WTC11 (cell line): ENCODE measurements at regions of chrX and their contacts with region 1.

Region 1: DNA sequence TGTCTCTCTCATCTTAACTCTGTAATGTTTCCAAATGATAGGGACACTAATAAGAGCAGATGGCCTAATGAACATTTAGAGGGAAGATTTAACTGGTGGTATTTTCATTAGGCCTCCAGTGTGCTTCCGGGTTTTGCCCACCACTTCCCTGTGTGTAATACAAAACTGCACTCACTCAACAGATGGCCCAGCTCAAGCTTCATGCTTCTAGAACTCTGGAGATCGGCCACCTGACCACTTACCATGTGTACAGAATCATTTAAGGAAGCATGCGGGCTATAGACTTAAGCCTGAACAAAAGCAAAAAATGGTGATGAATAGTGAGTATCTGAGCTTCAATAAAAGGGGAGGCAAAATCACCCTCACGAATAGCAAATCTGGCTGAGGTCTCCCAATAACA is 89.3 kb downstream of the SH2D1A start:
- DNase-seq: no peak
- ATAC-seq: no peak
- H3K4me3 Mint-ChIP-seq: no peak overlapping the region
- H3K27ac Mint-ChIP-seq: no peak overlapping the region
- H3K4me1 Mint-ChIP-seq: 0 out of 2 replicates have a peak, but pooled peaks cover 4% of the 10 kb centered on the region
- H3K27me3 Mint-ChIP-seq: no peaks in the 10 kb centered on the region
- CTCF ChIP-seq: no peak

Region 2: GRCh38 chrX:124406294-124407014 is 29.2 kb before region 1 on chrX:
- CTCF ChIA-PET with region 1: no interaction called
- POLR2A ChIA-PET with region 1: no interaction called
- DNase-seq: peak; percentile 35
- ATAC-seq: peak; percentile 47; the same call in 1 of the 2 replicates
- H3K4me3 Mint-ChIP-seq: no peak overlapping the region
- H3K27ac Mint-ChIP-seq: no peak overlapping the region
- H3K4me1 Mint-ChIP-seq: no peaks in the 10 kb centered on the region
- H3K27me3 Mint-ChIP-seq: no peaks in the 10 kb centered on the region
- CTCF ChIP-seq: no peak

Region 3: DNA sequence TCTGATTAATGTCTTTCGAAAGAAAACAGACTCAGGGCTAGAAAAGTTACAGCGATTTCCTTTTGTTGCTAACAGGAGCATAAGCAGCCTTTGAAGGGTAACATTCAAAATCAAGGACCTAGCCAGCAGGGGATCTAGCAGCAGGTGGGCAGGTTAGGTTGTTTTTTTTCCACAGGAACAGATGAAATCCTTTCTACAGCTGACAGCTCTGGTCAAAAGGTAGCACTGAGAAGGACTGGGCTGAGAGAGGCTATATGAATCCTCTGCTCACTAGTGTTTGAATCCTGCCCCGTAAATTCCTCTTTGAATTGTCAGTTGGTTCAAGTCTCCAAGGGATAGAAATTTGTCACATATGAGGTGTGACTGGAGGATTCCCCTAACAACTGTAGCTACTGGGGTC is 98.9 kb after region 1 on chrX:
- CTCF ChIA-PET with region 1: no interaction called
- POLR2A ChIA-PET with region 1: interaction called, 10 read pairs
- DNase-seq: peak; percentile 22
- ATAC-seq: peak; percentile 82
- H3K4me3 Mint-ChIP-seq: 0 out of 2 replicates have a peak overlapping the region, but pooled peaks have one; percentile 24
- H3K27ac Mint-ChIP-seq: peak overlapping the region; percentile 78
- H3K4me1 Mint-ChIP-seq: peaks cover 45% of the 10 kb centered on the region
- H3K27me3 Mint-ChIP-seq: no peaks in the 10 kb centered on the region
- CTCF ChIP-seq: no peak